ENCODE measurements at regions of chr4 and their contacts with region 1.

Region 1: DNA sequence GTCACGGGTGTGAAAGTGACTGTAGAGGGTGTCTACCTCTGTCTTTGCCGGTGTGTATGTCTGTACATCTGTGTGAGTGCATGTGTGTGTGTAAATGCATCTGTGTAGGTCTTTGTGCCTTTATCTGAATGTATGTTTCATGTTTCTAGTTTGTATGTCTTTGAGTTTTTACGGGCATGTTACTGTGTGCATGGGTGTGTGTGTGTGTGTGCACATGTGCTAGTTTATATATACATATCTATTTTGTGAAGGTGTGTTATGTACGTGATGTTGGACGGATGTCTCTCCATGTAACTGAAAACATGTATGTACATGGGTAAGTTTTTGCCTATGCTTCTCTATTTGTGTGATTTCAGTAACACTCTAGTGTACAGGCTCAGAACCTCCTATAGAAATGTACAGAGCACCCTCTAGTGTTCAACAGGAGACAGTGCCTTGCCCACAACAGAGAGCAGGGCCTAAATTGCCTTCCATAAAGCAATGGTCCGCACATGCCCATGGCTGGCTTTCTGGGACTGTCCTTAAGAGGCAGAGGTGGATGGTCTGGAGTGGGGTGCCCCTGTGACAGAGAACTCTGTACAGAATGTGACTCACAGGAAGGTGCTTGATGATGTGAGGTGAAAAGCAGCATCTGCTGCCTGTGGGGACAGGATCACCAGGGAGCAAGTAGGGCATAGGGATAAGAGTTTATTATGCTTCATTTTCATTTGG is 343.5 kb downstream of the RAPGEF2 start:
- DNase-seq: peak; percentile 16 to 59
- ATAC-seq: peak; percentile 96 to 99 (median 97)
- H3K4me3 ChIP-seq: no peak overlapping the region
- H3K27ac ChIP-seq: peak overlapping the region in 4 of 10 donors; percentile 1 to 36 (median 31)
- H3K4me1 ChIP-seq: peaks cover 2 to 18% (median 10%) of the 10 kb centered on the region in 9 donors
- H3K27me3 ChIP-seq: no peaks in the 10 kb centered on the region
- CTCF ChIP-seq: peak; percentile 79 to 96 (median 90)

Region 2: DNA sequence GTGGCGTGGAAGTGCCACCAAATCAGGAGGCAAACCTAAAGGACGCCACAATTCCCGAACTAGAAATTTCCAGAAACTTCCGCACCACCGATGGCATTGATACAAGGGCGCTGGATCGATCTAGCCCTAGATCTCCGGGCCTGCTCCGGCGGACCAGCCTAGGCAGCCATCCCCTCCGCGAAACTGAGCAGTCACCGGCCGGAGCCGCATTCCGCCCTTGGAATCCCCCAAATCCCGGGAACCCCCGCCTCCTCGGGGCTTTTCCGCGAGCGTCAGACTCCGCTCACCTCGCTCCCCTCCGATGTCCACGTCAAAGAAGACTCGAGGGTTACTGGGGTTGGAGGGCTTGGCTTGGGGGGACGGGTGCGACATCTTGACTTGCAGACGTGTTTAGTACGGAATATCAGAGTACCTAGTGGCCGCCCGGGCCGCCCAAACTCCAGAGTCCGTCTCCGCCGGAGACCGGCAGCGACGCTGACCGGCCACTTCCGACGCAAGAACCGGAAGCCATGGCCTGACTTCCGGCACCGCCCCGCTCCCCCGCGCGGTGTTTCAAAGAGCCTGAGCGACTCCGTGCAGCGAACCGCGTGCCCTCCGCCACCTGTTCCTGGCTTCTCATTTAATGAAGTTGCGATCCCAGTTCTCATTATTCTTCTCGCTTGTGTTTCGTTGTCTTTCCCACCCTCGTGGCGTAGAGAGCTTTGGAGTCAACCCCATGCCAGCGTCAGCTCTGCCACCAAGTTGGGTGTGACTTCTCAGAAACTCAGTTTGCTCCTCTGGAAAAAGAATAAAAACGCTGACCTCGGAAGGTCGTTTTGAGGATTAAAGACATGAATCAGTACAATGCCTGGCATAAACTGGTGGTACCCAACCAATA is 723.3 kb before region 1 on chr4 and contains the start of gene PPID:
- intact Hi-C with region 1: loop called in 6 of 10 experiments (anchors 5 to 10 kb)
- DNase-seq: peak; percentile 82 to 88
- ATAC-seq: peak; percentile 97 to 99 (median 98)
- H3K4me3 ChIP-seq: peak within 1 kb of the TSS; percentile 62 to 97 (median 78)
- H3K27ac ChIP-seq: peak within 1 kb of the TSS; percentile 82 to 97 (median 92)
- H3K4me1 ChIP-seq: peaks cover 0 to 29% (median 10%) of the 10 kb centered on the region in 9 donors
- H3K27me3 ChIP-seq: no peaks in the 10 kb centered on the region
- CTCF ChIP-seq: peak in 2 of 9 donors; percentile 18 to 19
- total RNA-seq, gene PPID: 23.8 to 37.1 (median 33.1) TPM

Region 3: GRCh38 chr4:158856852-158857251 is 589.6 kb before region 1 on chr4:
- intact Hi-C with region 1: loop called in 9 of 10 experiments (anchors 2 to 10 kb)
- DNase-seq: no peak
- ATAC-seq: peak in 7 of 8 donors; percentile 29 to 85 (median 76)
- H3K4me3 ChIP-seq: no peak overlapping the region
- H3K27ac ChIP-seq: no peak overlapping the region
- H3K4me1 ChIP-seq: peaks cover 0 to 18% (median 4%) of the 10 kb centered on the region in 9 donors
- H3K27me3 ChIP-seq: no peaks in the 10 kb centered on the region
- CTCF ChIP-seq: peak in 8 of 9 donors; percentile 23 to 75 (median 60)

Region 4: GRCh38 chr4:159206427-159206871 is 240.0 kb before region 1 on chr4:
- intact Hi-C with region 1: loop called in 6 of 10 experiments (anchors 5 to 10 kb)
- DNase-seq: no peak
- ATAC-seq: peak in 1 of 8 donors; percentile 30
- H3K4me3 ChIP-seq: no peak overlapping the region
- H3K27ac ChIP-seq: peak overlapping the region in 6 of 10 donors; percentile 7 to 36 (median 23)
- H3K4me1 ChIP-seq: peaks cover 8 to 89% (median 58%) of the 10 kb centered on the region in 9 donors
- H3K27me3 ChIP-seq: no peaks in the 10 kb centered on the region
- CTCF ChIP-seq: no peak

Region 5: DNA sequence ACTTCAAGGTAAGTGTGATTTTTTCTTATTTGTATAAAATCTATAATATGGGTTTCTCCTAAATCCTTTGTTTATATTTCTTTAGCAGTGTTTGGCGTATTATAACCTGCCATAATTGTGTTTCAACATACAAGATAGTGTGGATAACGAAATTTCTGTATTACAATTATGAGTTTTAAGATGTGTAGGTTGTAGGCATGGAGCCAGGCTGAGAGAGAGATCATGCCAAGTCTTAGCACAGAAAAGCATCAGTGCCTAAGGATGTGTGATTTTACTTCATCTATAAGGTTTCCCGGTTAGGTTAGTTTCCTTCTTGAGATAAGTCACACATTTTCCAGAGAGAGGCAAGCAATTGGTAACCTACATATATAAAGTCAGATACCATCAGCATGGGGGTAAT is 182.4 kb before region 1 on chr4:
- intact Hi-C with region 1: no loop called
- DNase-seq: no peak
- ATAC-seq: no peak
- H3K4me3 ChIP-seq: no peak overlapping the region
- H3K27ac ChIP-seq: no peak overlapping the region
- H3K4me1 ChIP-seq: peaks cover 0 to 77% (median 49%) of the 10 kb centered on the region in 9 donors
- H3K27me3 ChIP-seq: no peaks in the 10 kb centered on the region
- CTCF ChIP-seq: no peak

Region 6: GRCh38 chr4:159352609-159353008 is 93.8 kb before region 1 on chr4:
- intact Hi-C with region 1: loop called in 2 of 10 experiments (anchors 5 to 10 kb)
- DNase-seq: no peak
- ATAC-seq: peak in 3 of 8 donors; percentile 34 to 52 (median 38)
- H3K4me3 ChIP-seq: no peak overlapping the region
- H3K27ac ChIP-seq: peak overlapping the region in 4 of 10 donors; percentile 3 to 49 (median 25)
- H3K4me1 ChIP-seq: peaks cover 0 to 44% (median 3%) of the 10 kb centered on the region in 9 donors
- H3K27me3 ChIP-seq: no peaks in the 10 kb centered on the region
- CTCF ChIP-seq: peak in 1 of 9 donors; percentile 8

Region 7: GRCh38 chr4:159400558-159401225 is 45.7 kb before region 1 on chr4:
- intact Hi-C with region 1: loop called in 1 of 10 experiments (anchors 5 kb)
- DNase-seq: peak in 1 of 2 donors; percentile 13
- ATAC-seq: peak in 5 of 8 donors; percentile 23 to 60 (median 33)
- H3K4me3 ChIP-seq: peak overlapping the region in 7 of 10 donors; percentile 1 to 38 (median 24)
- H3K27ac ChIP-seq: peak overlapping the region; percentile 21 to 84 (median 64)
- H3K4me1 ChIP-seq: peaks cover 8 to 56% (median 29%) of the 10 kb centered on the region in 9 donors
- H3K27me3 ChIP-seq: no peaks in the 10 kb centered on the region
- CTCF ChIP-seq: no peak

Measured in heart right ventricle (tissue), 16 donors.